ENCODE measurements at regions of chr7 and their contacts with region 1.

Region 1: GRCh38 chr7:156949541-156950380 is at the start of gene NOM1:
- DNase-seq: peak; percentile 93
- H3K4me3 Mint-ChIP-seq: peak within 1 kb of the TSS; percentile 87
- H3K27ac Mint-ChIP-seq: peak within 1 kb of the TSS; percentile 10
- H3K4me1 Mint-ChIP-seq: peaks cover 27% of the 10 kb centered on the region
- H3K27me3 Mint-ChIP-seq: peaks cover 9% of the 10 kb centered on the region
- total RNA-seq, gene NOM1: 29.2 to 31.3 TPM

Region 2: GRCh38 chr7:156918635-156919034 is 31.1 kb before region 1 on chr7:
- CTCF ChIA-PET with region 1: interaction called, 17 read pairs
- POLR2A ChIA-PET with region 1: interaction called, 9 read pairs
- intact Hi-C with region 1: loop called (anchors 1 kb)
- DNase-seq: no peak
- H3K4me3 Mint-ChIP-seq: no peak overlapping the region
- H3K27ac Mint-ChIP-seq: peak overlapping the region; percentile 71
- H3K4me1 Mint-ChIP-seq: peaks cover 42% of the 10 kb centered on the region
- H3K27me3 Mint-ChIP-seq: peaks cover 39% of the 10 kb centered on the region

Region 3: DNA sequence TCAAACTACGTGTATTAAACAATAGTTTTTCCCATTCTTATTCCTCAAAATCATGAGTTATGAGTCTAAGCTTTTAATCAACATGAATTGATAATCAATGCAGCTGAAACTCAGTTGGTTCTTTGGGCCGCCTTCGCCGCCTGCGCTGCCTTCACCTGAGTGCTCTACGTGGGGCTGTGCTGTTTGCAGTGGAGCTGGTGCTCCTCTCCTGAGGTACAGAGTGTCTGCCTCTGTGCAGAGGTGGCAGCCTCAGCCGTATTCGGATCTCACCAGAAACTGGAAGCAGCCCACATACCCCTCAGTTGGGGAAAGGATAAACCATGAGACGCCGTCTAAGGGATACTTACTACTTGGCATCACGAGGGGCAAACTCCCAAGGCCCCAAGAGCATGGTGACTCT is 15.2 kb after region 1 on chr7:
- CTCF ChIA-PET with region 1: interaction called, 12 read pairs
- POLR2A ChIA-PET with region 1: interaction called, 3 read pairs
- intact Hi-C with region 1: no loop called
- DNase-seq: no peak
- H3K4me3 Mint-ChIP-seq: no peak overlapping the region
- H3K27ac Mint-ChIP-seq: no peak overlapping the region
- H3K4me1 Mint-ChIP-seq: no peaks in the 10 kb centered on the region
- H3K27me3 Mint-ChIP-seq: no peaks in the 10 kb centered on the region

Region 4: GRCh38 chr7:157238087-157238486 is 288.3 kb after region 1 on chr7:
- CTCF ChIA-PET with region 1: no interaction called
- POLR2A ChIA-PET with region 1: no interaction called
- intact Hi-C with region 1: loop called (anchors 10 kb)
- DNase-seq: no peak
- H3K4me3 Mint-ChIP-seq: no peak overlapping the region
- H3K27ac Mint-ChIP-seq: no peak overlapping the region
- H3K4me1 Mint-ChIP-seq: peaks cover 5% of the 10 kb centered on the region
- H3K27me3 Mint-ChIP-seq: no peaks in the 10 kb centered on the region